T-cell (primary cell): ENCODE measurements at regions of chr1 and their contacts with region 1.

Region 1: DNA sequence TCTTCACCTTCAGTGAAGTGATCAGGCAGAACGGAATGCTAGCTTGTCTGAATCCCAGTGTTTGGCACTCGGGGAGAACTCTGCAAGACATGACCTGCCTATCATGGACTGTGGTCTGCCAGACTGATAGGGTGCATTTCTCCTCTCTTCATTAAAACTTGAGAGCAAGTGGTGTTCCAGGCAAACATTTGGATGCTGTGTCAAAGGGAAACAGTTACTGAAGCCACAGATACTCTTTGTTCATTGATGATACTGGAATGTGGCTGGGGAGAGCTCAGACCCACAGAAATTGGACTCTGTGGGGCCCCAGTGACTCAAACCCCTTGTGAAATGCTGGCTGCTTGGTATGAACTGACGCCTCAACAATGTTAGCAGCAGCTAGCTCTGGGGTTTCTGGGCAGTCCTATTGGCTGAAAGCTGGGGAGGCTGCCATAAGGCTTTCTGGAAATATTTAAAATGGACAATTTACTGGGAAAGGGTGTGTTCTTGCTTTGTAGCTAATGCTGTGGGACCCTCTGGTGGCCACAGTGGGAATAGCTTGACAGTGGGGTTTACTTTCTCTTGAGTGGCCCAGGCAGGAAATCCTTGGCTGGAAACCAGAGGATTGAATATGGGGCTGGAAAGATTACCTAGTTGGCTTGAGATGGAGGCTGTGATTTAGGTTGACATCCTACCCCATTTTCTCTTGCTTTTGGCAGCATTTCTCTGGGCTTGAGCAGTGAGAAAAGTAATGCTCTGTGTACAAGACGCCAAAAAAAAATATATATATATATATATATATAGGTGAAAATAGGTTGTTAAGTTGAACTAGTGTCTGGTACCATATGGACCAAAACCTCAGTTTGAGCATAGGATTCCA is 8.0 kb upstream of the S100A10 start:
- DNase-seq: peak; percentile 28 to 86 (median 70)
- ATAC-seq: peak; percentile 71 to 84 (median 76)
- H3K4me3 ChIP-seq: no peak overlapping the region
- H3K4me3 Mint-ChIP-seq: no peak overlapping the region
- H3K27ac ChIP-seq: no peak overlapping the region
- H3K27ac Mint-ChIP-seq: no peak overlapping the region
- H3K4me1 ChIP-seq: peaks cover 0 to under 1% of the 10 kb centered on the region in 2 experiments
- H3K4me1 Mint-ChIP-seq: peaks cover 0 to 5% (median 0%) of the 10 kb centered on the region in 3 donors
- H3K27me3 ChIP-seq: peaks cover 3% of the 10 kb centered on the region in 2 experiments
- H3K27me3 Mint-ChIP-seq: peaks cover 7 to 9% of the 10 kb centered on the region in 2 donors

Region 2: GRCh38 chr1:151888972-151889570 is 112.5 kb before region 1 on chr1:
- CTCF ChIA-PET with region 1: interaction called, 8 to 20 read pairs
- POLR2A ChIA-PET with region 1: interaction called, 7 to 8 read pairs
- DNase-seq: peak in 1 of 35 experiments; percentile 60
- ATAC-seq: peak in 3 of 4 experiments; percentile 51 to 62 (median 55)
- H3K4me3 ChIP-seq: no peak overlapping the region
- H3K4me3 Mint-ChIP-seq: no peak overlapping the region
- H3K27ac ChIP-seq: no peak overlapping the region
- H3K27ac Mint-ChIP-seq: peak overlapping the region; percentile 17 to 73
- H3K4me1 ChIP-seq: peaks cover 5 to 15% of the 10 kb centered on the region in 2 experiments
- H3K4me1 Mint-ChIP-seq: peaks cover 29 to 38% (median 36%) of the 10 kb centered on the region in 3 donors
- H3K27me3 ChIP-seq: no peaks in the 10 kb centered on the region
- H3K27me3 Mint-ChIP-seq: no peaks in the 10 kb centered on the region

Region 3: GRCh38 chr1:151934048-151934493 is 67.5 kb before region 1 on chr1:
- CTCF ChIA-PET with region 1: interaction called, 6 to 71 read pairs
- POLR2A ChIA-PET with region 1: no interaction called
- DNase-seq: peak in 25 of 35 experiments; percentile 9 to 82 (median 31)
- ATAC-seq: peak; percentile 75 to 86 (median 83)
- H3K4me3 ChIP-seq: no peak overlapping the region
- H3K4me3 Mint-ChIP-seq: no peak overlapping the region
- H3K27ac ChIP-seq: no peak overlapping the region
- H3K27ac Mint-ChIP-seq: peak overlapping the region; percentile 23 to 46
- H3K4me1 ChIP-seq: peaks cover 0 to 3% of the 10 kb centered on the region in 2 experiments
- H3K4me1 Mint-ChIP-seq: peaks cover 5 to 8% (median 6%) of the 10 kb centered on the region in 3 donors
- H3K27me3 ChIP-seq: no peaks in the 10 kb centered on the region
- H3K27me3 Mint-ChIP-seq: peaks cover 3 to 4% of the 10 kb centered on the region in 2 donors

Region 4: DNA sequence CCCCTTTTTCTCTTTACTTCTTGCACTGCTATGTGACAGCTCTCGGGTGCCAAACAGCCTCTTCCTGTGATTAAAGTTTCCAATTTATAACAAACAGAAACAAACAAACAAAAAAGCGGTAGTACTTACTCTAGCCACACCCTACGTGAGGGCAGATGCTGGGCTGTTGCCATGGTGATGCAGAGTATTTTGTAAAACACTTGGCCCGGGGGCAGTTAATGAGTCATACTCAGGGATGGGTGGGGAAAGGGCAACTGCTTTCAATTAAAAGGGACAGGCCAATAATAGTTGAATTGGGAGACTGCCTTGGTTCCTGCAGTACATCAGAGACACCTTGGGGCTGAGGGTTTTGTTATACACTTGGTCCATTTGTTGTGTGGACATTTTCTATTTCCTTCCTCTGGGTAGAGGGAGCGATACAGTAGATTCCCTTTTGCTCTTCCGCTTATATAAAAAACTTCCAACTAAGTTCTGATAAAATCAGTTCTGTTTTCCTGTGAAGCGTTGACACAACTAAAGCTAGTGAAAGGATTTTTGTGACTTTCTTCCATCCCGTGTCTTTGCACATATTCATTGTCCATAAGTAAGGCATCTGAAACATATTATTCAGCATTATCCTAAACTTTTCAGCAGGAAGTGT is 55.8 kb before region 1 on chr1:
- CTCF ChIA-PET with region 1: interaction called, 4 to 12 read pairs
- POLR2A ChIA-PET with region 1: no interaction called
- DNase-seq: peak; percentile 30 to 93 (median 77)
- ATAC-seq: peak; percentile 73 to 92 (median 84)
- H3K4me3 ChIP-seq: no peak overlapping the region
- H3K4me3 Mint-ChIP-seq: peak overlapping the region; percentile 19 to 68 (median 36)
- H3K27ac ChIP-seq: peak overlapping the region; percentile 96
- H3K27ac Mint-ChIP-seq: peak overlapping the region; percentile 89 to 94
- H3K4me1 ChIP-seq: peaks cover 5 to 30% of the 10 kb centered on the region in 2 experiments
- H3K4me1 Mint-ChIP-seq: peaks cover 29 to 49% (median 36%) of the 10 kb centered on the region in 3 donors
- H3K27me3 ChIP-seq: peaks cover 0 to 2% of the 10 kb centered on the region in 2 experiments
- H3K27me3 Mint-ChIP-seq: no peaks in the 10 kb centered on the region

Region 5: DNA sequence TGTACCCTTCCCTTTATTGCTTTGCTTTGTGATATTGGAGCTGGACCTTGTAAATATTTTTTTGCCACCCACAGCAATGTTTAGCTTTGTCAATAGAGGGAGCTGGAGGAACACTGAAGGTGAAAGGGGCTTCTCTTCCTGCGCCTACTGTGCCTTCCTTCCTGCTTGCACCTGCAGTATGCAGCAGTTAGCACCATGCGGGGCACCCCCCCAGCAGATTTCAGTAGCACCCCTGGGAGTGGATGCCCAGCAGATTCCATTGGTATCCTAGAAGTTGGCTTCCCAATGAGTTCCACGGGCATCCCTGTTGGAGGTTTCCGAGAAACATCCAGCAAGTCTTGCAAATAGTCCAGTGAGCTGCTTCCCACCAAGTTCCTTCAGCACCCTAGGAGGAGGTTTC is 33.6 kb before region 1 on chr1:
- CTCF ChIA-PET with region 1: interaction called, 17 to 95 read pairs
- POLR2A ChIA-PET with region 1: no interaction called
- DNase-seq: peak in 32 of 35 experiments; percentile 10 to 82 (median 40)
- ATAC-seq: peak; percentile 86 to 99 (median 96)
- H3K4me3 ChIP-seq: no peak overlapping the region
- H3K4me3 Mint-ChIP-seq: no peak overlapping the region
- H3K27ac ChIP-seq: no peak overlapping the region
- H3K27ac Mint-ChIP-seq: no peak overlapping the region
- H3K4me1 ChIP-seq: peaks cover 0 to 5% of the 10 kb centered on the region in 2 experiments
- H3K4me1 Mint-ChIP-seq: peaks cover 8 to 17% (median 10%) of the 10 kb centered on the region in 3 donors
- H3K27me3 ChIP-seq: peaks cover 0 to 4% of the 10 kb centered on the region in 2 experiments
- H3K27me3 Mint-ChIP-seq: peaks cover 3 to 7% of the 10 kb centered on the region in 2 donors

Region 6: DNA sequence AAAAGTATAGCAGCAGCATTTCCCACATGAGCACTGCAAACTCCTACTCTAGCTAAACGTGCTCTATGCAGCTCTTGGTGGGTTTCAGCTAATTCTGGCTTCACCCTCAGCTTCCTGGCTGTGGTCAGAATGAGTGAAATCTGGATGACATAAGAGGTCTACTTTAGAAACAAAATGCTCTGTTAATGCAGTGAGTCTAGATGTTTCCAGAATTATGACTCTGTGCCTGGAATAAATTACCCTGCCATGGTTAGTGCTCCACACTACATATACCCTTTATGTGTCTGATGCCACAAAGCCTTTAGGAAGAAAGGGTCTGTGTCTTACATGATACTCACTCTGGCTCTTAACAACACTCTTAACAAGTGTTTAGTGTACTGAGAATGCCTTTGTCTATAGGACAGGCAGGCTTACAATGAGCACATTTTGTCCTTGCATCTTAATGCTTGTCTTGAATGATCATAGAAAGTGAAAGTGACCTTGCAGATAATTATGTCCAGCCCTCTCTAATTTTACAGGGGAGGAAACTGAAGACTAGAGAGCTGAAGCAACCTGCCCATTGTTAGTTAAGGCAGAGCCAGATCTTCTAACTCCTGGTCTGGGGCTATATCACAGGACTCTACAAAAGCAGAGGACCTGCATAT is 17.2 kb before region 1 on chr1:
- CTCF ChIA-PET with region 1: interaction called, 5 to 11 read pairs
- POLR2A ChIA-PET with region 1: interaction called in 1 of 2 experiments, 5 read pairs
- DNase-seq: peak in 1 of 35 experiments; percentile 42
- ATAC-seq: peak; percentile 63 to 85 (median 72)
- H3K4me3 ChIP-seq: no peak overlapping the region
- H3K4me3 Mint-ChIP-seq: no peak overlapping the region
- H3K27ac ChIP-seq: peak overlapping the region; percentile 50
- H3K27ac Mint-ChIP-seq: peak overlapping the region; percentile 47 to 82
- H3K4me1 ChIP-seq: peaks cover 0 to 23% of the 10 kb centered on the region in 2 experiments
- H3K4me1 Mint-ChIP-seq: peaks cover 44 to 55% (median 54%) of the 10 kb centered on the region in 3 donors
- H3K27me3 ChIP-seq: no peaks in the 10 kb centered on the region
- H3K27me3 Mint-ChIP-seq: no peaks in the 10 kb centered on the region

Region 7: GRCh38 chr1:152034646-152035405 is 33.2 kb after region 1 on chr1:
- CTCF ChIA-PET with region 1: interaction called, 3 to 11 read pairs
- POLR2A ChIA-PET with region 1: interaction called in 1 of 2 experiments, 3 read pairs
- DNase-seq: peak; percentile 21 to 81 (median 44)
- ATAC-seq: peak; percentile 79 to 91 (median 81)
- H3K4me3 ChIP-seq: peak overlapping the region; percentile 89 to 90
- H3K4me3 Mint-ChIP-seq: peak overlapping the region; percentile 97 to 99 (median 97)
- H3K27ac ChIP-seq: peak overlapping the region; percentile 82
- H3K27ac Mint-ChIP-seq: peak overlapping the region; percentile 98 to 99
- H3K4me1 ChIP-seq: peaks cover 15 to 45% of the 10 kb centered on the region in 2 experiments
- H3K4me1 Mint-ChIP-seq: peaks cover 49 to 58% (median 54%) of the 10 kb centered on the region in 3 donors
- H3K27me3 ChIP-seq: no peaks in the 10 kb centered on the region
- H3K27me3 Mint-ChIP-seq: no peaks in the 10 kb centered on the region